ENCODE measurements at regions of chr1 and their contacts with region 1.

Region 1: DNA sequence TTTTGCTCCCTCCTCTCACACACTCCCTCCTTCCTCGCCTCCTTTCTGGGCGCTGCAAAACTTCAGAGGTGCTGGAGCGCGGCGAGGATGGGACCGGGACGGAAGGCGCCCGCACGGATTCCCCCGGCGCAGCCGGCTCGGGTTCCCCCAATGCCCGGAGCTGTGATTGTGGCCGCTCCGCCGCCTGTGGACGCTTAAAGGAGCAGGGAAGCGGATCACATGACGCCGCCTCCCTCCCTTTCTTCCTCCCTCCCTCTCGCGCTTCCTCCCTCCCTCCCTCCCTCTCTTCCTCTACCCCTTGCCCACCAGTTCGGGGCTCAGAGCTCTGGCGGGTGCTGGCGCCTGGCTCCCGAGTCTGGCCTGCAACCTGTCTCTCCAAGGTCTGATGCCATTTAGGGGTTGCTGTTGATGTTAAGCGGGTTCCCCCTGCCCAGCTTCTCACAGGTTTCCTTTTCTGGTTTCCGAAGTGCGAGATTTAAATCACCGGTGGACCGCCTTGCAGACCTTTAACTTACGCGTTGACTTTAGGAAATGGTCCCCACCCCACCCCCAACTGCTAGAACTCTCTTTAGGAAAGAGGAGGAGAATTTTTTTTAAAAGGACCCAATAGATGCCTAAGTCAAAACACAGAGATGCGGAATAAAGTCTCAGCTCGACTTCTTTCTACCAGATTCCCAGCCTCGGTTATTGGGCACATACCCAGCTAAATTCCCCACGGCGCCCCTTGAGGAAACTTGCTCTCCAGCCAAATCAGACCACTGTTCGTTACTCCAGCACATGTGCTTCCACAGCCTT is at the start of gene WLS:
- DNase-seq: peak; percentile 72
- H3K4me3 Mint-ChIP-seq: peak within 1 kb of the TSS; percentile 91
- H3K27ac Mint-ChIP-seq: peak within 1 kb of the TSS; percentile 42
- H3K4me1 Mint-ChIP-seq: peaks cover 19% of the 10 kb centered on the region
- H3K27me3 Mint-ChIP-seq: no peaks in the 10 kb centered on the region
- CTCF ChIP-seq: no peak
- total RNA-seq, gene WLS: 34.7 and 37.8 TPM in 2 replicates

Region 2: DNA sequence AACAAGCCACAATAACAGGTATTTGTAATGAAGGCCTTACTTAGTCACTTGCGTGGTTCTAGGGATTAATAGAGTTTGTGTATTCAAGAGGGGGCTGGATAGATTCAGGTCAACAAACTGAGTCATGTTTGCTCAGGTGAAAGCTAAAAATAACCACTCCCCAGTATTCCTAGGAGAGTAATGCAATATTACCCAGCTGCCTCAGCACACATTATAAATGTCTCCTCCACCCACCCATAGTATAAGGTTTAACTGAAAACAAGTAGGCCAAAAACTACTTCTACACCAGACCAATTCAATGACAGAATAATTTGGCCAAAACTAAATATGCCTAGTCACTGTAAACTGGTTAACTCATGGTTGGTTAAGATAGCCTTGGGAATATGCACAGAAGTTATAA is 34.7 kb before region 1 on chr1:
- CTCF ChIA-PET with region 1: interaction called, 17 read pairs
- POLR2A ChIA-PET with region 1: interaction called, 22 read pairs
- intact Hi-C with region 1: loop called (anchors 2 kb)
- DNase-seq: peak; percentile 75
- H3K4me3 Mint-ChIP-seq: no peak overlapping the region
- H3K27ac Mint-ChIP-seq: peak overlapping the region; percentile 77
- H3K4me1 Mint-ChIP-seq: peaks cover 20% of the 10 kb centered on the region
- H3K27me3 Mint-ChIP-seq: no peaks in the 10 kb centered on the region
- CTCF ChIP-seq: no peak

Region 3: GRCh38 chr1:68221621-68222373 is 10.8 kb before region 1 on chr1:
- CTCF ChIA-PET with region 1: no interaction called
- POLR2A ChIA-PET with region 1: interaction called, 70 read pairs
- intact Hi-C with region 1: no loop called
- DNase-seq: peak; percentile 22
- H3K4me3 Mint-ChIP-seq: peak overlapping the region; percentile 45
- H3K27ac Mint-ChIP-seq: peak overlapping the region; percentile 83
- H3K4me1 Mint-ChIP-seq: peaks cover 32% of the 10 kb centered on the region
- H3K27me3 Mint-ChIP-seq: no peaks in the 10 kb centered on the region
- CTCF ChIP-seq: no peak

Region 4: GRCh38 chr1:68339471-68339870 is 106.9 kb after region 1 on chr1:
- CTCF ChIA-PET with region 1: interaction called, 12 read pairs
- POLR2A ChIA-PET with region 1: interaction called, 3 read pairs
- intact Hi-C with region 1: loop called (anchors 1 kb)
- DNase-seq: peak; percentile 63
- H3K4me3 Mint-ChIP-seq: no peak overlapping the region
- H3K27ac Mint-ChIP-seq: peak overlapping the region; percentile 43
- H3K4me1 Mint-ChIP-seq: peaks cover 10% of the 10 kb centered on the region
- H3K27me3 Mint-ChIP-seq: peaks cover 18% of the 10 kb centered on the region
- CTCF ChIP-seq: no peak